ENCODE measurements at regions of chr6 and their contacts with region 1.

Region 1: GRCh38 chr6:133553652-133554051 is 312.5 kb downstream of the EYA4 start:
- DNase-seq: peak; percentile 73
- H3K4me3 ChIP-seq: no peak overlapping the region
- H3K27ac ChIP-seq: no peak overlapping the region
- H3K4me1 ChIP-seq: peaks cover 17% of the 10 kb centered on the region
- H3K27me3 ChIP-seq: peaks cover 5% of the 10 kb centered on the region

Region 2: GRCh38 chr6:133184798-133185372 is 368.8 kb before region 1 on chr6:
- in situ Hi-C with region 1: loop called (anchors 10 kb)
- DNase-seq: peak; percentile 47
- H3K4me3 ChIP-seq: no peak overlapping the region
- H3K27ac ChIP-seq: no peak overlapping the region
- H3K4me1 ChIP-seq: no peaks in the 10 kb centered on the region
- H3K27me3 ChIP-seq: peaks cover 20% of the 10 kb centered on the region

Region 3: DNA sequence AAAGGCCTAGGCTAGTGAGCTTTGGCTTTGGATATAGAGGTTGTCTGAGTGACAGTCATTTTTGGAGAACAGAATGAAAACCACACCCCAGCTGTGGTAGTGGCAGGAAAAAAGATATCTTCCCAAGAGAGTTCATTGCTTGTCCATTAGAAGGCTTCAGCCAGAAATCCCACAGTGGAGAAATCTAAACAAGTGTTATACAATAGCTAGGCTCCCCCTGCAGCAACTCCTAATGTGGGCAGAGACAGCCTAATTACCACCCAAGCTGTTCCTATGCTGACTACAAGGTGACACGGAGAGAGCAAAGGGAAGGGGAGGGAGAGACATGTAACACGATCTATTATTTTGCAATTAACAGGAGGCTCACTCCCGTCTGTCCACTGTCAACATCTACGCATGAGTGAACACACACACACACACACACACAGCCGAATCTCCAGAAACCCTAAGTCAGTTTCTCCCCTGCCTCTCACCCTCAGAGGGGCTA is 187.8 kb after region 1 on chr6:
- in situ Hi-C with region 1: no loop called
- DNase-seq: peak; percentile 16
- H3K4me3 ChIP-seq: no peak overlapping the region
- H3K27ac ChIP-seq: no peak overlapping the region
- H3K4me1 ChIP-seq: peaks cover 18% of the 10 kb centered on the region; the same call in 1 of the 2 replicates
- H3K27me3 ChIP-seq: no peaks in the 10 kb centered on the region